GM12878 (cell line): ENCODE measurements at regions of chr6 and their contacts with region 1.

Region 1: DNA sequence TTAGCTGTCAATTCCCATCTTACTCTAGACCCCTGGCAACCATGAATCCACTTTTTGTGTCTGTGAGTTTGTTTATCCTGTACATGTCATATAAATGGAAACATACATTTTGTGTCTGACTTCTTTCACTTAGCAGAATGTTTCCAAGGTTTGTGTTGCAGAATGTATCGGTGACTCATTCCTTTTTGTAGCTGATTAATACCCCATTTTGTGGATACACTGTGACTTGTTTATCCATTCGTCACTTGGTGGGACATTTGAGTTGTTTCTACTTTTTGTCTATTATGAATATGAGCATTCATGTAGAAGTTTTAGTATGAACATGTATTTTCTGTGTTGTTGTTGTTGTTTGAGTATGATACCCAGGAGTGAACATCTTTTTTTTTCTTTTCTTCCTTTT is 21.4 kb downstream of the CDYL start:
- DNase-seq: no peak
- ATAC-seq: no peak
- H3K4me3 ChIP-seq: no peak overlapping the region
- H3K27ac ChIP-seq: no peak overlapping the region
- H3K4me1 ChIP-seq: peaks cover 17% of the 10 kb centered on the region
- H3K27me3 ChIP-seq: no peaks in the 10 kb centered on the region
- CTCF ChIP-seq: no peak
- EP300 ChIP-seq: no peak
- POLR2A ChIP-seq: no peak
- RAD21 ChIP-seq: no peak

Region 2: GRCh38 chr6:4781426-4781825 is 16.2 kb before region 1 on chr6:
- CTCF ChIA-PET with region 1: interaction called, 15 read pairs
- POLR2A ChIA-PET with region 1: interaction called, 65 read pairs
- RAD21 ChIA-PET with region 1: interaction called, 203 read pairs
- SMC1A ChIA-PET with region 1: interaction called, 237 read pairs
- in situ Hi-C with region 1: no loop called
- intact Hi-C with region 1: loop called (anchors 2 kb)
- DNase-seq: no peak
- ATAC-seq: peak; percentile 39
- H3K4me3 ChIP-seq: peak overlapping the region; percentile 61
- H3K27ac ChIP-seq: peak overlapping the region; percentile 66
- H3K4me1 ChIP-seq: peaks cover 26% of the 10 kb centered on the region
- H3K27me3 ChIP-seq: no peaks in the 10 kb centered on the region
- CTCF ChIP-seq: no peak
- EP300 ChIP-seq: no peak
- POLR2A ChIP-seq: no peak
- RAD21 ChIP-seq: no peak